ENCODE measurements at regions of chr16 and their contacts with region 1.

Region 1: DNA sequence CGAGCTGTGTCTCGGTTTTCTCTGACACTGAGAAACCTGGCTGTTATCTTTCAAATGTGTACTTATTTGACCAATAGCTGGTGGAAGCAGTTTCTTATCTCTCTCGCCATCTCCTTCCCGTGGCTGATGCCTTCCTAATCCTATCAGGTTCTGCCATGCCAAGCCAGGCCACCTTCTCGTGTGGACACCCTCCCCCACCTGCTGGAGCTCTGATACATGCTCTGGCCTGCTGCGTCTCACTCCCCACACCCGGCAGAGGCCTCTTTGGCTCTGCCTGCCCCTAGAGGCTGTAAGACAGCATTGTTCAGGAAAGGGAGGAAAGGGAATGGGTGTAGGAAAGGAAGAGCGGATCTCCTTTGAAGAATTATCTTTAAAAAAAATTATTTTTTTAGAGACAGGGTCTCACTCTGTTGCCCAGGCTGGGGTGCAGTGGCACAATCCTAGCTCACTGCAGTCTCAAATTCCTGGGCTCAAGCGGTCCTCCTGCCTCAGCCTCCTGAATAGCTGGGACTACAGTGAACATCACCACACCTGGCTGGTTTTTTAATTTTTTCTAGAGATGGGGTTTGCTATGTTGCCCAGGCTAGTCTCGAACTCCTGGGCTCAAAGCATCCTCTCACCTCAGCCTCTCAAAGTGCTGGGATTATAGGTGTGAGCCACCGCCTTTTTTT is 7.5 kb upstream of the ARMC5 start:
- DNase-seq: peak; percentile 62 to 84 (median 67)
- ATAC-seq: peak; percentile 80
- H3K4me3 ChIP-seq: no peak overlapping the region
- H3K27ac ChIP-seq: no peak overlapping the region
- H3K4me1 ChIP-seq: peaks cover 48 to 49% of the 10 kb centered on the region in 2 experiments
- H3K27me3 ChIP-seq: no peaks in the 10 kb centered on the region
- CTCF ChIP-seq: peak; percentile 80 to 92 (median 83)
- EP300 ChIP-seq: peak; percentile 24; the same call in 1 of the 2 replicates
- POLR2A ChIP-seq: no peak
- RAD21 ChIP-seq: peak; percentile 12 to 58; a peak in 2 of 4 replicates

Region 2: DNA sequence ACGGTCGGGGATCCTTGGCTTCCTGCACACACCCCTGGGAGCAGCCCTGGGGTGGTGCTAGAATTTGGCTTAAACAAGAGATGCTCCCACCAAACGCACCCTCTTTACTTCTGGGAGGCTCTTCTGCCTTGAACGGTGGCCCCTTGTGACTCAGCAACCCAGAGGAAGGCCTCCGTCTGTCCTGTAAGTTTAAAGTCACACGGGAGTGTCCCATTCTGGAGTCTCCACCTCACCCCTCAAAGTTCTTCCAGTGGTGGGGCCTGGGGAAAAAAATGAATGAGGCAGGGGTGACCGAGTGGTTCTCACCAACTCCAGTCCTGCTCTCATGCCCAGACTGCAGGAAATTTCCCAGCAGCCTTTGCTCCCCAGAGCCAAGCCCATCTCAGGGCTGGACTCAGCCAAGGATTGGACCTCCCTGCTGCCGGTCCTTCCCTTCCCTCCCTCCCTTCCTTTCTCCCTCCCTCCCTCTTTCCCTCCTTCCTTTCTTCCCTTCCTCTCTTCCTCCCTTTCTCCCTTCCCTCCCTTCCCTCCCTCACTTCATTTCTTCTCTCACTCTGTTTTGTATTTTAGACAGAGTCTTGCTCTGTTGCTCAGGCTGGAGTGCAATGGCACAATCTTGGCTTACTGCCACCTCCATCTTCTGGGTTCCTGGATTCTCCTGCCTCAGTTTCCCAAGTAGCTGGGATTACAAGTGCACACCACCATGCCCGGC is 47.3 kb before region 1 on chr16:
- CTCF ChIA-PET with region 1: no interaction called
- POLR2A ChIA-PET with region 1: interaction called, 3 read pairs
- in situ Hi-C with region 1: no loop called
- intact Hi-C with region 1: loop called (anchors 5 kb)
- DNase-seq: peak; percentile 74 to 80 (median 78)
- ATAC-seq: peak; percentile 92
- H3K4me3 ChIP-seq: peak overlapping the region; percentile 48
- H3K27ac ChIP-seq: peak overlapping the region; percentile 50; the same call in 2 of the 3 replicates
- H3K4me1 ChIP-seq: peaks cover 3 to 10% of the 10 kb centered on the region in 2 experiments; a peak in 2 of 5 replicates
- H3K27me3 ChIP-seq: peaks cover 5 to 22% of the 10 kb centered on the region in 2 experiments; a peak in 4 of 5 replicates
- CTCF ChIP-seq: no peak
- EP300 ChIP-seq: no peak
- POLR2A ChIP-seq: peak; percentile 68
- RAD21 ChIP-seq: no peak

Region 3: DNA sequence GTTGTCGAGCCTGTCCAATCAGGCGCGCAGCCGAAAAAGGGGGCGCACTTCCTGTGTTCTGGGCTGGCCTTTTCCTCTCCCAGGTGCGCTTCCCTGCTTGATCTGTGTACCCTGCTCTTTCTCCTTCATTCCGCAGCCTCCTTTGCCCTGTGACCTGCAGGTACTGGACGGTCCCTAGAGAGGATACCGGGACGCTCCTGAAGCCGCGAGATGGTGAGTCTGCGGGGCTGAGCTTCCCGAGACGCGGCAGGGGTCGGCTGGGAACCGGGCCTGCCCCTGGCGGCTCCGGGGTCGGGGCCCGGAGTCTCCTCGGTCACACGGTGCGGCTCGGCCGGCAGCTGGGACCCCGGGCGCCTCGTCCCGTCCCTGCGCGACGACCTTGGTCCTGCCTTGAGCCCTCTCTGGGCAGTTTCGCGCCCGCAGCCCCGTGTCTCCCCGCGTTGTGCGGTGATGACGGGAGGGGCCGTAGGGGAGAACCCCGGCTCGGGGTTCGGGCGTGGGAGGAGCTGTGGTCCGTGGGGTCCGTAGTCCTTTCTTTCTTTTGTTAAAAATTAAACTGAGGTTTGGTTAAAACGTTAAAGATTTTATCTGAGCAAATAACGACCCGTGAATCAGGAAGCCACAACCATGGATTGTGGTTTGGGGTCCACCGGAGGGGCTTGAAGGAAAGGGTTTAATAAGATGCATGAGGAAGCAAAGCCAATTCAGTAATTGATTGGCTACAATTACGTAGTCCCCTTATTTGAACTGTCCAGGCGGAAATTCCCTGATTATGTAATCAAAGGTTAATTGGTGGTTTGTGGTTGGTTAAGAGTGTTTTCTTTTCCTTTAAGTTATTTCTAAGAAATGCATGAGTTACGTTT is 248.9 kb after region 1 on chr16:
- CTCF ChIA-PET with region 1: interaction called, 3 read pairs
- POLR2A ChIA-PET with region 1: interaction called, 3 read pairs
- in situ Hi-C with region 1: loop called (anchors 10 kb)
- intact Hi-C with region 1: loop called (anchors 2 kb)
- DNase-seq: peak in 3 of 4 experiments; percentile 39 to 93 (median 56)
- ATAC-seq: peak; percentile 71
- H3K4me3 ChIP-seq: peak overlapping the region; percentile 84
- H3K27ac ChIP-seq: peak overlapping the region; percentile 66
- H3K4me1 ChIP-seq: peaks cover 5 to 8% of the 10 kb centered on the region in 2 experiments; a peak in 3 of 5 replicates
- H3K27me3 ChIP-seq: no peaks in the 10 kb centered on the region
- CTCF ChIP-seq: 0 out of 6 replicates have a peak, but pooled peaks of 1 of the 3 experiments have one; percentile 19
- EP300 ChIP-seq: no peak
- POLR2A ChIP-seq: peak; percentile 79
- RAD21 ChIP-seq: no peak

Region 4: GRCh38 chr16:31713071-31713944 is 261.5 kb after region 1 on chr16:
- CTCF ChIA-PET with region 1: no interaction called
- POLR2A ChIA-PET with region 1: interaction called, 10 read pairs
- in situ Hi-C with region 1: no loop called
- intact Hi-C with region 1: no loop called
- DNase-seq: peak; percentile 94 to 97 (median 96)
- ATAC-seq: peak; percentile 96
- H3K4me3 ChIP-seq: peak overlapping the region; percentile 92
- H3K27ac ChIP-seq: peak overlapping the region; percentile 96
- H3K4me1 ChIP-seq: peaks cover 11 to 13% of the 10 kb centered on the region in 2 experiments
- H3K27me3 ChIP-seq: no peaks in the 10 kb centered on the region
- CTCF ChIP-seq: no peak
- EP300 ChIP-seq: no peak
- POLR2A ChIP-seq: peak; percentile 98
- RAD21 ChIP-seq: no peak